ENCODE measurements at regions of chr18 and their contacts with region 1.

Region 1: GRCh38 chr18:25832001-25832604 is 258.3 kb downstream of the SS18 start:
- DNase-seq: peak; percentile 55 to 67 (median 64)
- ATAC-seq: peak; percentile 92
- H3K4me3 ChIP-seq: no peak overlapping the region
- H3K27ac ChIP-seq: no peak overlapping the region
- H3K4me1 ChIP-seq: no peaks in the 10 kb centered on the region
- H3K27me3 ChIP-seq: no peaks in the 10 kb centered on the region
- CTCF ChIP-seq: peak; percentile 62 to 84 (median 68)
- EP300 ChIP-seq: no peak
- POLR2A ChIP-seq: no peak
- RAD21 ChIP-seq: peak; percentile 55 to 76

Region 2: GRCh38 chr18:24600076-24600654 is 1231.9 kb before region 1 on chr18:
- CTCF ChIA-PET with region 1: no interaction called
- POLR2A ChIA-PET with region 1: no interaction called
- in situ Hi-C with region 1: no loop called
- intact Hi-C with region 1: loop called (anchors 5 kb)
- DNase-seq: peak; percentile 28 to 50 (median 33)
- ATAC-seq: peak; percentile 72
- H3K4me3 ChIP-seq: no peak overlapping the region
- H3K27ac ChIP-seq: no peak overlapping the region
- H3K4me1 ChIP-seq: no peaks in the 10 kb centered on the region
- H3K27me3 ChIP-seq: no peaks in the 10 kb centered on the region
- CTCF ChIP-seq: peak in 2 of 3 experiments; percentile 46 to 52; a peak in 3 of 6 replicates
- EP300 ChIP-seq: no peak
- POLR2A ChIP-seq: no peak
- RAD21 ChIP-seq: peak; percentile 55 to 68

Region 3: DNA sequence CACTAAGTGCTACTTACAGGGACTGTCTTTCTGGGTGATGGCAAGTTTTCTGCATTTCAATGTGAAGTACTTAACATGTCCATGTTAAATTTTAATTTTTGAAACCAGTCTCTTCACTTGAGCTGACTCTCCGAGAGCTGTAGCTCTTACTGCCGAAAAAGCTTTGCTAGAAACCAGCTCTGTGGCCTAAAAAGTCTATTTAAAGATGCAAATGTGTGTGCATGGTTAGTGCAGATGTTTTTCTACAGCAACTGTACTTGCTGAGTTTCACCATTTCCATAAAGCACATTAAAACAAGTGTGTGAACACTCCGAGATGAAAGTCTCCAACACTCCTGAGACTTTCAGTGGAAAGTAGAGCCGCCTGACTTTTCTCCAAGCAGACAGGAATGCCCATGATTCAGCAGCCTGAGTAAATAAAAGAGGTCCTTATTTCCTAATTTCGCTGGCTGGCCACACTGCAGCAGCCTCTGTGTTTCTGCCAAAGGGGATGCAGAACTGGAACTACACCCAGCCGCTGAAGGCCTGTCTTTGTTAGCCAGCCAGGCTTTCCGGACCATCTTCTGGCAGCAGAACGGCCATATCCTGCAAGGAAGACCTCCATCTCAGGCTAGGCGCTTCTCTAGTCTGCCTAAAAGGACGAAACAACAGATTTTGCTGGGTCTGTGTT is 601.3 kb before region 1 on chr18:
- CTCF ChIA-PET with region 1: no interaction called
- POLR2A ChIA-PET with region 1: no interaction called
- in situ Hi-C with region 1: no loop called
- intact Hi-C with region 1: loop called (anchors 10 kb)
- DNase-seq: no peak
- ATAC-seq: no peak; the same call in 2 of the 3 replicates
- H3K4me3 ChIP-seq: no peak overlapping the region
- H3K27ac ChIP-seq: no peak overlapping the region
- H3K4me1 ChIP-seq: no peaks in the 10 kb centered on the region; a peak in 2 of 5 replicates
- H3K27me3 ChIP-seq: no peaks in the 10 kb centered on the region
- CTCF ChIP-seq: no peak
- EP300 ChIP-seq: no peak
- POLR2A ChIP-seq: no peak
- RAD21 ChIP-seq: no peak

Region 4: DNA sequence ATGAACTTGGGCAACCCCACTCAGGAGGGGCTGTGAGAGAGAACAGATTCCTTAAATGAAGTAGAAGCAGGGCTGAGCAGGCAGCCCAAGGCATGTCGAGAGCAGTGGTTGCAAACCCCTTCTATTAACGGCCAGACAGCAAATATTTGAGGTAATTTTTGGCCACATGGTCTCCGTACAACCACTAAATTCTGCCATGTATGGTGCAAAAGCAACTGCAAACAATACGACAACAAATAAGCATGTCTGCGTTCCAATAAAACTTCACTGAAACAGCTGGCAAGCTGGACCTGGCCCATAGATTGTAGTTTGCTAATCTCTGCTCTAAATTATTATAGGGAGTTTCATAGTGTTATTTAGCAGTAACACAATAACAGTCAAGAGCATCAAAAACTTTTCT is 263.1 kb before region 1 on chr18:
- CTCF ChIA-PET with region 1: no interaction called
- POLR2A ChIA-PET with region 1: no interaction called
- in situ Hi-C with region 1: no loop called
- intact Hi-C with region 1: loop called (anchors 5 kb)
- DNase-seq: no peak
- ATAC-seq: no peak
- H3K4me3 ChIP-seq: no peak overlapping the region
- H3K27ac ChIP-seq: no peak overlapping the region
- H3K4me1 ChIP-seq: no peaks in the 10 kb centered on the region
- H3K27me3 ChIP-seq: no peaks in the 10 kb centered on the region
- CTCF ChIP-seq: no peak
- EP300 ChIP-seq: no peak
- POLR2A ChIP-seq: no peak
- RAD21 ChIP-seq: no peak

Region 5: GRCh38 chr18:25669741-25670140 is 162.4 kb before region 1 on chr18:
- CTCF ChIA-PET with region 1: no interaction called
- POLR2A ChIA-PET with region 1: no interaction called
- in situ Hi-C with region 1: no loop called
- intact Hi-C with region 1: loop called (anchors 10 kb)
- DNase-seq: no peak
- ATAC-seq: no peak
- H3K4me3 ChIP-seq: no peak overlapping the region
- H3K27ac ChIP-seq: no peak overlapping the region
- H3K4me1 ChIP-seq: no peaks in the 10 kb centered on the region
- H3K27me3 ChIP-seq: no peaks in the 10 kb centered on the region
- CTCF ChIP-seq: 0 out of 6 replicates have a peak, but pooled peaks of 1 of the 3 experiments have one; percentile 5
- EP300 ChIP-seq: no peak
- POLR2A ChIP-seq: no peak
- RAD21 ChIP-seq: no peak

Region 6: DNA sequence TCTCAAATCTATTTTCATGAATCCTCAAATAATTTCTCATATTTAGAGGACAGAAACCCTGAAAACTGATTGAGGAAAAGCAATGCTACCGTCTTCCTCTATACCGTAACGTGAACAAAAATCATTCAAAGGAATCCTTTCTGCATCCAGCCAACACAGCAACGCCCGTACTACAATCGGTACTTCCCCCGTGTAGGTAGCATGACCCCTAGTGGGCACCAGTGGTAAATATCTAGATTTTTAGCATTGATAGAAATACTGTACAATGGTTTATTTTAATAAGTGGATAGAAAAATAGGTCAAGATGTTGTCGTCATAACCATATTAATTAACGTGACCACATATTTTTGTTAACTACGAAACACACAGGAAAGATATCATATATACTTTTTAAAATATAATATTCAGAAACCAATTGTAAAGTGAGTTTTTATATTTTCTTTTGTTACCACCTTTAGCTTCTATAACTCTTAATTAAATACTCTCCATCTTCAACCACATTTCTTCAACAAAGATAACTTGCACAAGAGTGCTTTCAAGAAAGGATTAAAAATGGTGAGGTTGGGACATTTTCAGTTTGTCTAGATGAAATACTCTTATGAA is 64.2 kb after region 1 on chr18:
- CTCF ChIA-PET with region 1: no interaction called
- POLR2A ChIA-PET with region 1: no interaction called
- in situ Hi-C with region 1: no loop called
- intact Hi-C with region 1: loop called (anchors 10 kb)
- DNase-seq: peak; percentile 58 to 64 (median 61)
- ATAC-seq: peak; percentile 90
- H3K4me3 ChIP-seq: no peak overlapping the region
- H3K27ac ChIP-seq: no peak overlapping the region
- H3K4me1 ChIP-seq: no peaks in the 10 kb centered on the region
- H3K27me3 ChIP-seq: no peaks in the 10 kb centered on the region
- CTCF ChIP-seq: peak; percentile 67 to 91 (median 84)
- EP300 ChIP-seq: no peak
- POLR2A ChIP-seq: no peak
- RAD21 ChIP-seq: peak; percentile 62 to 76

Region 7: GRCh38 chr18:25985707-25986394 is 153.7 kb after region 1 on chr18:
- CTCF ChIA-PET with region 1: no interaction called
- POLR2A ChIA-PET with region 1: no interaction called
- in situ Hi-C with region 1: no loop called
- intact Hi-C with region 1: no loop called
- DNase-seq: no peak
- ATAC-seq: no peak
- H3K4me3 ChIP-seq: no peak overlapping the region
- H3K27ac ChIP-seq: no peak overlapping the region
- H3K4me1 ChIP-seq: peaks cover 0 to 11% of the 10 kb centered on the region in 2 experiments; a peak in 3 of 5 replicates
- H3K27me3 ChIP-seq: peaks cover 0 to 7% of the 10 kb centered on the region in 2 experiments; a peak in 1 of 5 replicates
- CTCF ChIP-seq: no peak
- EP300 ChIP-seq: no peak
- POLR2A ChIP-seq: no peak
- RAD21 ChIP-seq: no peak

Measured in K562 (cell line).